T-cell (primary cell): ENCODE measurements at regions of chrX and their contacts with region 1.

Region 1: GRCh38 chrX:103686199-103687072 is at the start of gene MORF4L2:
- DNase-seq: peak; percentile 57 to 96 (median 88)
- ATAC-seq: peak; percentile 87 to 91 (median 90)
- H3K4me3 ChIP-seq: peak within 1 kb of the TSS; percentile 78 to 86
- H3K4me3 Mint-ChIP-seq: peak within 1 kb of the TSS in 2 of 3 donors; percentile 60 to 71
- H3K27ac ChIP-seq: peak within 1 kb of the TSS; percentile 98
- H3K27ac Mint-ChIP-seq: no peak within 1 kb of the TSS
- H3K4me1 ChIP-seq: peaks cover 0 to 4% of the 10 kb centered on the region in 2 experiments
- H3K4me1 Mint-ChIP-seq: peaks cover 5 to 12% (median 10%) of the 10 kb centered on the region in 3 donors
- H3K27me3 ChIP-seq: no peaks in the 10 kb centered on the region
- H3K27me3 Mint-ChIP-seq: peaks cover 0 to 8% of the 10 kb centered on the region in 2 donors
- total RNA-seq, gene MORF4L2: 72.4 to 152 (median 86.9) TPM

Region 2: DNA sequence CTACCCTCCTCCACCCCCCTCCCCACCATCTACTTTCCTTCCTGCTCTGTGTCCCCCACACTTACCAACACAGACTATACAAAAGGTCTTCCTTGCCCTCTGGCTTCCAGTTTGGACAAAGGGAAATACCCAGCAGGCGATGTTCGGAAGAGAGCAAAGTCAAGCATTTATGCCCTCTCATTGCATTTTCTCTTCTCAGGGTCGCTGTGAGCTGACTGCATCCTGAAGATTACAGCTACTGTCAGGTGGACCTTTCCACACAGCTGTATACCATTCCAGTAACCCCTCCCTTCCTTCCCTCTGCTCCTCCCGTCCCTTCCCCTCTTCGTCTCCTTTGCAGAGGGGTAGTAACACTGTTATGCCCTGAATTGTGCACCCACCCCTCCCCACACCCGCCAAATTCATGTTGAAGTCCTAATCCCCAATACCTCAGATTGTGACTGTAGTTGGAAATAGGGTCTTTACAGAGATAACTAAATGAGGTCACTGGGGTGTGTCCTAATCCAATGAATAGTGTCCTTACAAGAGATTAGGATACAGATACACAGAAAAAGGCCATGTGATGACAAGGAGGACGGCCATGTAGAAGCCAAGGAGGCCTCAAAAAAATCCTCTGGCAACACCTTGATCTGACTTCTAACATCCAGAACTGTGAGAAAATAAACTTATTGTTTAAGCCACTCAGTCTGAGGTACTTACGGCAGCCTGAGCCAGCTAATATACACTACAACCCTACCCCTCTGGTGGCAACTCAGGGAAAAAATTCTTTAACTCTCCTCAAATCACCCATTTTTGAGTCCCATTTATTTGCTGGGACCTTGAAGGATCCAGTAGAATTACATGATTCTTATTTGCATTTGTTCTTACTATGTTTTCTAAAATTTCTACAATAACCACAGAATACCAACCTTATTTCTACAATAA is 11.6 kb before region 1 on chrX:
- CTCF ChIA-PET with region 1: interaction called in 1 of 2 experiments, 3 read pairs
- POLR2A ChIA-PET with region 1: interaction called in 1 of 2 experiments, 12 read pairs
- DNase-seq: no peak
- ATAC-seq: no peak
- H3K4me3 ChIP-seq: no peak overlapping the region
- H3K4me3 Mint-ChIP-seq: no peak overlapping the region
- H3K27ac ChIP-seq: no peak overlapping the region
- H3K27ac Mint-ChIP-seq: no peak overlapping the region
- H3K4me1 ChIP-seq: no peaks in the 10 kb centered on the region
- H3K4me1 Mint-ChIP-seq: peaks cover 0 to 15% (median 2%) of the 10 kb centered on the region in 3 donors
- H3K27me3 ChIP-seq: no peaks in the 10 kb centered on the region
- H3K27me3 Mint-ChIP-seq: peaks cover 0 to 14% of the 10 kb centered on the region in 2 donors

Region 3: DNA sequence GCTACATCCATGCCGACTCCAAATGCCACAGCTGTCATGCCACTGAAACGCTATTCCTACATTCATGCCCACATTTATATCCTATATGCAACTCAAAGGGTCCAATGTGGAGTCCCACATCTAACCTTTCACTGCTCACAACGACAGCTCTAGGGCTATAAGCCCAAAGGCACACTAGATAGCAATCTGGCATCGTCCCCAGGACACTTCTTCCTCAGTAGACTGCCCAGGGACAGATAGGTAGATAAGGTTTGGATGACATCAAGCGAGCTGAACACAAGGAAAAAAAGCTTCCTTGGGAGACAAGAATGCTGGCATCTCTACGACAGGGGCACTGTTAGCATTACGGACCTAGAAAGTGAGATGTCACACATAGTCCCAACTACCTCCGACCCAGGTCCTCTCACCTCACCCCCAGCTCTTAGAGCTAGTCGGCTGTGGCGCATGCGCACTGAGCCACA is 144.9 kb after region 1 on chrX:
- CTCF ChIA-PET with region 1: interaction called in 1 of 2 experiments, 3 read pairs
- POLR2A ChIA-PET with region 1: interaction called in 1 of 2 experiments, 12 read pairs
- DNase-seq: peak in 12 of 35 experiments; percentile 22 to 71 (median 56)
- ATAC-seq: peak in 1 of 4 experiments; percentile 13
- H3K4me3 ChIP-seq: peak overlapping the region; percentile 62 to 64
- H3K4me3 Mint-ChIP-seq: peak overlapping the region; percentile 76 to 81 (median 78)
- H3K27ac ChIP-seq: no peak overlapping the region
- H3K27ac Mint-ChIP-seq: no peak overlapping the region
- H3K4me1 ChIP-seq: peaks cover 0 to 7% of the 10 kb centered on the region in 2 experiments
- H3K4me1 Mint-ChIP-seq: peaks cover 3 to 13% (median 3%) of the 10 kb centered on the region in 3 donors
- H3K27me3 ChIP-seq: no peaks in the 10 kb centered on the region
- H3K27me3 Mint-ChIP-seq: peaks cover 4 to 34% of the 10 kb centered on the region in 2 donors